ENCODE measurements at regions of chr1 and their contacts with region 1.

Region 1: DNA sequence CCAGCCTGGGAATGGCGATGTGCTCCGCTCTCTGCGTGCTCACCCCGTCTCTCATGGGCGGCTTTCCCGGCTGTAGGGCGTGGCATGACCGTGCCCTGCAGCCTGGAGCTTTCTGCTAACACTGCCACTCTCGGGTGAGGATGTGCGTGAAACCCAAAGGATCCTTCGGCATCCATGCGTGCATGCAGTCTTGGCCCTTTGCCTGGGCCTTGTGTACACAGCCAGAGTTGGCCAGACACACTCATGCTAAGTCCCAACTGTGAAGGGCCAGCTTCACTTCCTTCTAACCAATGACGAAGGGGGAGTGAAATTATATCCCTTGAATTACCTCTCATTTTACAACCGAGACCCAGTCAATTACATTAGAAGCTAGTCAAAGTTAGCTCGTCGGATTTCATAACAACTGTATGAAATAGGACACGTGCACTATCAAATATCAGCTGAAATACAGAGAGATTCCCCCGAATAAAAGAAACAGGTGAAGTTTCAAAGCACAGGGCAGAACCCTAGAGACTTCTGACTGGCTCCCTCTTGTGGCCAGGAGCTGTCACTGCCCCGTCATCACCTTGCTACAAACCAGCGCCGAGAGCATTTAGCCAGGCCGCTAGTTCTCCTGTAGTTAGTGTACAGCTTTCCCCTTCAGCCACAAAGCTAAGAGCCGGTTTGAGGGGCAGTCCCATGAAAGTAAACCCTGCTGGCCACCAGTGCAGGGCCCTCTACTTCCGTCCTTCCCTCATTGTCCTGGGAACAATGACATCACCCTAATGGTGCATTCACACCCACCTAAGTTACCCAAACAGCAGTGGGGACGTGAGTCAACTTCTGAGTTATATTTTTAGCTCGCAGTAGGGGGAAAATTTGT is 63.4 kb upstream of the COA6 start:
- DNase-seq: peak; percentile 55 to 89 (median 69)
- ATAC-seq: peak; percentile 96
- H3K4me3 ChIP-seq: no peak overlapping the region
- H3K4me3 Mint-ChIP-seq: no peak overlapping the region
- H3K27ac ChIP-seq: no peak overlapping the region
- H3K27ac Mint-ChIP-seq: peak overlapping the region; percentile 43
- H3K4me1 ChIP-seq: peaks cover 38% of the 10 kb centered on the region
- H3K4me1 Mint-ChIP-seq: peaks cover 18% of the 10 kb centered on the region
- H3K27me3 ChIP-seq: no peaks in the 10 kb centered on the region
- H3K27me3 Mint-ChIP-seq: no peaks in the 10 kb centered on the region
- CTCF ChIP-seq: peak; percentile 95

Region 2: DNA sequence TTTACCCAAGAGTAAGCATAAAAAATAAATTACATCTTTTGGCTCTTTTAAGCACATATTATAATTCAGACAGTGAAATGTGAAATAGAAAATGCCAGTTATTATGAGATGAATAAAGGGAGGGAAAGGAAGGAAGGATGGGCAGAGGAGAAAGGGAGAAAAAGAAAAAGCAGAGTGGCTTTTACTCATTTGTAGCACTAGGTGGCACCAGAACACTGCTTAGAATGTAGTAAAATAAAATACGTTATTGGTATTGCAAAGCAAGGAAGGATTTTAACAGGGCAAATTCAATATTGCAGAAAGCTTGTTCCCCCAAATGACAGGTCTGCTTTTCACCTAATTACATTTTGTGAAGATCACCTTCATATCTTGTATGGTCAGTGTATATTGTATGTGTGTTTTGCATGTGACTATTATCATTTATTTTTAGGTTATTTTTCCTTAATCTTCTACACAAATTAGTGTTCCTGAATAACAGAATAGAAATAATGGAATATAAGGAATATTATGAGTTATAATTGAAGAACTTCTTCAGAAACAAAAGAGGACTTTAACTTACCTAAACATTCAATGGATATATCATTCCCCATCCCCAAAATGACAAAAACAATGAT is 1005.2 kb before region 1 on chr1:
- CTCF ChIA-PET with region 1: no interaction called
- POLR2A ChIA-PET with region 1: no interaction called
- intact Hi-C with region 1: loop called in 1 of 2 experiments (anchors 10 kb)
- DNase-seq: peak in 4 of 14 experiments; percentile 15 to 68 (median 58)
- ATAC-seq: peak; percentile 73
- H3K4me3 ChIP-seq: no peak overlapping the region
- H3K4me3 Mint-ChIP-seq: no peak overlapping the region
- H3K27ac ChIP-seq: no peak overlapping the region
- H3K27ac Mint-ChIP-seq: no peak overlapping the region
- H3K4me1 ChIP-seq: no peaks in the 10 kb centered on the region
- H3K4me1 Mint-ChIP-seq: no peaks in the 10 kb centered on the region
- H3K27me3 ChIP-seq: no peaks in the 10 kb centered on the region
- H3K27me3 Mint-ChIP-seq: peaks cover 16% of the 10 kb centered on the region
- CTCF ChIP-seq: peak; percentile 95

Region 3: GRCh38 chr1:234154320-234155251 is 155.2 kb before region 1 on chr1:
- CTCF ChIA-PET with region 1: no interaction called
- POLR2A ChIA-PET with region 1: no interaction called
- intact Hi-C with region 1: loop called in 1 of 2 experiments (anchors 5 kb)
- DNase-seq: peak in 6 of 14 experiments; percentile 3 to 71 (median 30)
- ATAC-seq: no peak
- H3K4me3 ChIP-seq: no peak overlapping the region
- H3K4me3 Mint-ChIP-seq: no peak overlapping the region
- H3K27ac ChIP-seq: no peak overlapping the region
- H3K27ac Mint-ChIP-seq: no peak overlapping the region
- H3K4me1 ChIP-seq: no peaks in the 10 kb centered on the region
- H3K4me1 Mint-ChIP-seq: no peaks in the 10 kb centered on the region
- H3K27me3 ChIP-seq: peaks cover 0 to 7% of the 10 kb centered on the region in 2 experiments
- H3K27me3 Mint-ChIP-seq: peaks cover 9% of the 10 kb centered on the region
- CTCF ChIP-seq: peak; percentile 91

Region 4: GRCh38 chr1:234212764-234213657 is 96.8 kb before region 1 on chr1:
- CTCF ChIA-PET with region 1: interaction called, 27 read pairs
- POLR2A ChIA-PET with region 1: interaction called, 5 read pairs
- intact Hi-C with region 1: loop called (anchors 5 kb)
- DNase-seq: peak in 6 of 14 experiments; percentile 12 to 72 (median 37)
- ATAC-seq: peak; percentile 68
- H3K4me3 ChIP-seq: no peak overlapping the region
- H3K4me3 Mint-ChIP-seq: peak overlapping the region; percentile 76
- H3K27ac ChIP-seq: no peak overlapping the region
- H3K27ac Mint-ChIP-seq: peak overlapping the region; percentile 6
- H3K4me1 ChIP-seq: peaks cover 25% of the 10 kb centered on the region
- H3K4me1 Mint-ChIP-seq: peaks cover 20% of the 10 kb centered on the region
- H3K27me3 ChIP-seq: peaks cover 4 to 26% of the 10 kb centered on the region in 2 experiments
- H3K27me3 Mint-ChIP-seq: peaks cover 47% of the 10 kb centered on the region
- CTCF ChIP-seq: peak; percentile 64

Region 5: GRCh38 chr1:234256359-234256758 is 53.5 kb before region 1 on chr1:
- CTCF ChIA-PET with region 1: no interaction called
- POLR2A ChIA-PET with region 1: no interaction called
- intact Hi-C with region 1: no loop called
- DNase-seq: no peak
- ATAC-seq: no peak
- H3K4me3 ChIP-seq: no peak overlapping the region
- H3K4me3 Mint-ChIP-seq: no peak overlapping the region
- H3K27ac ChIP-seq: no peak overlapping the region
- H3K27ac Mint-ChIP-seq: no peak overlapping the region
- H3K4me1 ChIP-seq: peaks cover 5% of the 10 kb centered on the region
- H3K4me1 Mint-ChIP-seq: peaks cover 9% of the 10 kb centered on the region
- H3K27me3 ChIP-seq: no peaks in the 10 kb centered on the region
- H3K27me3 Mint-ChIP-seq: no peaks in the 10 kb centered on the region
- CTCF ChIP-seq: no peak

Region 6: GRCh38 chr1:234292011-234292410 is 17.8 kb before region 1 on chr1:
- CTCF ChIA-PET with region 1: interaction called, 12 read pairs
- POLR2A ChIA-PET with region 1: no interaction called
- intact Hi-C with region 1: no loop called
- DNase-seq: no peak
- ATAC-seq: no peak
- H3K4me3 ChIP-seq: no peak overlapping the region
- H3K4me3 Mint-ChIP-seq: no peak overlapping the region
- H3K27ac ChIP-seq: no peak overlapping the region
- H3K27ac Mint-ChIP-seq: no peak overlapping the region
- H3K4me1 ChIP-seq: no peaks in the 10 kb centered on the region
- H3K4me1 Mint-ChIP-seq: no peaks in the 10 kb centered on the region
- H3K27me3 ChIP-seq: no peaks in the 10 kb centered on the region
- H3K27me3 Mint-ChIP-seq: no peaks in the 10 kb centered on the region
- CTCF ChIP-seq: no peak

Region 7: DNA sequence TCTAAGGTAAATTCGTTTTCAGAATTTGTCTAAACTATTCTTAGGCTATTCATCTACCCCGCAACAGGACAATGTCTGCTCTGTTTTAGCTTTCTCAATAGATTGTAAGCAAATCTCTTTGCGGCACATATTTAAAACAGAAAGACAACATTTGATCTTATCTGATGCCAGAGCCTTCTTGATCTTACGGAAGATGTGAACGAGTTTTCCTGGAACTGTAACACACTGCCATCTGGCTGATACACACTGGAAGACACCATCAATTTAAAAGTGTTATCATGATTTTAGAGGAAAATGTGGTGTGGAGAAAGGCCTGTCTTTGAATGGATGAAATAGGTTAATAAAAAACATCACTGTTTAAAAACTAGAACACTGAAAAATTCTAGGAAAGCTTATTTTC is 99.5 kb after region 1 on chr1:
- CTCF ChIA-PET with region 1: interaction called, 6 read pairs
- POLR2A ChIA-PET with region 1: interaction called, 6 read pairs
- intact Hi-C with region 1: loop called in 1 of 2 experiments (anchors 1 kb)
- DNase-seq: peak in 7 of 14 experiments; percentile 8 to 84 (median 41)
- ATAC-seq: peak; percentile 57
- H3K4me3 ChIP-seq: peak overlapping the region; percentile 38
- H3K4me3 Mint-ChIP-seq: peak overlapping the region; percentile 67
- H3K27ac ChIP-seq: peak overlapping the region; percentile 77
- H3K27ac Mint-ChIP-seq: peak overlapping the region; percentile 91
- H3K4me1 ChIP-seq: peaks cover 18% of the 10 kb centered on the region
- H3K4me1 Mint-ChIP-seq: peaks cover 50% of the 10 kb centered on the region
- H3K27me3 ChIP-seq: no peaks in the 10 kb centered on the region
- H3K27me3 Mint-ChIP-seq: no peaks in the 10 kb centered on the region
- CTCF ChIP-seq: peak; percentile 78